Activated CD4-positive, alpha-beta memory T cell treated with anti-CD3 and anti-CD28 coated beads for 36 hours (primary cell): ENCODE measurements at regions of chr15 and their contacts with region 1.

Region 1: GRCh38 chr15:44426975-44427755 is at the start of gene CTDSPL2:
- DNase-seq: peak; percentile 97
- H3K4me3 Mint-ChIP-seq: peak within 1 kb of the TSS; percentile 95
- H3K27ac Mint-ChIP-seq: peak within 1 kb of the TSS; percentile 100
- H3K4me1 Mint-ChIP-seq: peaks cover 36% of the 10 kb centered on the region
- H3K27me3 Mint-ChIP-seq: no peaks in the 10 kb centered on the region
- total RNA-seq, gene CTDSPL2: 53.1 to 55.9 TPM

Region 2: DNA sequence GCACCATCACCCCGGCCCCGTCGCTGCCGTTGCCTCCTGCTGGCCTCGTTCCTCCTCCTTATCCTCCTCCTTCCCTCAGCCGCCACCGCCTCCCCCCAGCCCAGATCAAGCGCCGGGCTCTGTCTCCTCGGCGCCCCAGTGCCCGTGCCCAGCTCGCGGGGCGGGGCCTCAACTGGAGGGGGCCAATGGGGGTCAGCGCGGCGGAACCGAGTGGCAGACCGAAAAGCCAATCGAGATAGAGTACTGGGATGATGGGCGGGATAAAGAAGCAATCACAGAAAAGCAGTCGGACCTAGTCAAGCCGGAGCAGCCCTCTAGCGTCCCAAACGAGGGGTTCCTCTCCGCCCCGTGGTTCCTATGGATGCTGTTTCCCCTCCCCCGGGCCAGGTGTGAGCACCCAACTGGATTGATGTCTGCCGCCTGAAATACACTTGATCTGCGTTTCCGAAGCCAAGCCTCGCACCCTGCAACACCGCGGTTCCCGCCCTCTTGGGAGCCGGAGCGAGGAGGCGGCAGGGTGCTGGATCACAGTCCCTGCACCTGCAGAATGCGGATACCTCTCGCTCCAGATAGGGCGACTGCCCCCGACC is 231.9 kb before region 1 on chr15 and contains the start of gene FRMD5:
- CTCF ChIA-PET with region 1: no interaction called
- POLR2A ChIA-PET with region 1: no interaction called
- intact Hi-C with region 1: loop called (anchors 2 kb)
- DNase-seq: peak; percentile 94
- H3K4me3 Mint-ChIP-seq: peak within 1 kb of the TSS; percentile 68
- H3K27ac Mint-ChIP-seq: no peak within 1 kb of the TSS
- H3K4me1 Mint-ChIP-seq: peaks cover 16% of the 10 kb centered on the region
- H3K27me3 Mint-ChIP-seq: peaks cover 42% of the 10 kb centered on the region
- total RNA-seq, gene FRMD5: 0.24 to 0.31 TPM

Region 3: GRCh38 chr15:44308415-44308814 is 118.8 kb before region 1 on chr15:
- CTCF ChIA-PET with region 1: interaction called, 3 read pairs
- POLR2A ChIA-PET with region 1: interaction called, 9 read pairs
- intact Hi-C with region 1: loop called (anchors 1 kb)
- DNase-seq: peak; percentile 56
- H3K4me3 Mint-ChIP-seq: peak overlapping the region; percentile 46
- H3K27ac Mint-ChIP-seq: peak overlapping the region; percentile 89
- H3K4me1 Mint-ChIP-seq: peaks cover 39% of the 10 kb centered on the region
- H3K27me3 Mint-ChIP-seq: no peaks in the 10 kb centered on the region

Region 4: GRCh38 chr15:44325568-44325967 is 101.6 kb before region 1 on chr15:
- CTCF ChIA-PET with region 1: no interaction called
- POLR2A ChIA-PET with region 1: no interaction called
- intact Hi-C with region 1: no loop called
- DNase-seq: no peak
- H3K4me3 Mint-ChIP-seq: no peak overlapping the region
- H3K27ac Mint-ChIP-seq: no peak overlapping the region
- H3K4me1 Mint-ChIP-seq: no peaks in the 10 kb centered on the region
- H3K27me3 Mint-ChIP-seq: no peaks in the 10 kb centered on the region

Region 5: DNA sequence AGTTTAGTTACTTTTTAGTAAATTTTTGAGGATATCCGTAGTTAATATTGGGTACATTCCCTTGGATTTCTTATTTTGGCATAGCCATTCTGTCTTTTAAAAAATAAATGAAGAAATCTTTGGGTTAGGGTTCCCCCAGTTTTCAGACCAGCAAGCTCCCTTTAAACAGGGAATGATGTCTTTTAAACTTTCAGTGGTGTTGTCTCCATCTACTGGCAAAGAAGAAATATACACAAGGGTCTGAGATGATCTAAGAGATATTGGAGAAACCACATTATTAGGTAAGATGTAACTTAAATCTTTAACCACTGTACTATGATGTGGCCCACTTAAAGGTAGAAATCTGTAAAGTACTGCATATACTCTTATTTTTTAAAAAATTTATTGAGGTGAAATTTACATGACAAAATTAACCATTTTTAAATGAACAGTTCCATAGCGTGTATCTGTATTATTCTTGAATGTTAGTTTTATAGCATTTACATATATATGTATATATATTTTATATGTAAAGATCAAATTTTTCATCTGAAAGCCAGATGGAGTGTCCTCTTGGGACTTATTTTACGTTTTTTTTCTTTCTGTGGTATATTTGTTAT is 74.7 kb after region 1 on chr15:
- CTCF ChIA-PET with region 1: interaction called, 14 read pairs
- POLR2A ChIA-PET with region 1: interaction called, 18 read pairs
- intact Hi-C with region 1: loop called (anchors 2 kb)
- DNase-seq: no peak
- H3K4me3 Mint-ChIP-seq: no peak overlapping the region
- H3K27ac Mint-ChIP-seq: peak overlapping the region; percentile 48
- H3K4me1 Mint-ChIP-seq: peaks cover 22% of the 10 kb centered on the region
- H3K27me3 Mint-ChIP-seq: no peaks in the 10 kb centered on the region

Region 6: GRCh38 chr15:44633603-44634002 is 206.4 kb after region 1 on chr15:
- CTCF ChIA-PET with region 1: no interaction called
- POLR2A ChIA-PET with region 1: no interaction called
- intact Hi-C with region 1: loop called (anchors 5 kb)
- DNase-seq: peak; percentile 18
- H3K4me3 Mint-ChIP-seq: peak overlapping the region; percentile 70
- H3K27ac Mint-ChIP-seq: peak overlapping the region; percentile 96
- H3K4me1 Mint-ChIP-seq: peaks cover 23% of the 10 kb centered on the region
- H3K27me3 Mint-ChIP-seq: no peaks in the 10 kb centered on the region

Region 7: DNA sequence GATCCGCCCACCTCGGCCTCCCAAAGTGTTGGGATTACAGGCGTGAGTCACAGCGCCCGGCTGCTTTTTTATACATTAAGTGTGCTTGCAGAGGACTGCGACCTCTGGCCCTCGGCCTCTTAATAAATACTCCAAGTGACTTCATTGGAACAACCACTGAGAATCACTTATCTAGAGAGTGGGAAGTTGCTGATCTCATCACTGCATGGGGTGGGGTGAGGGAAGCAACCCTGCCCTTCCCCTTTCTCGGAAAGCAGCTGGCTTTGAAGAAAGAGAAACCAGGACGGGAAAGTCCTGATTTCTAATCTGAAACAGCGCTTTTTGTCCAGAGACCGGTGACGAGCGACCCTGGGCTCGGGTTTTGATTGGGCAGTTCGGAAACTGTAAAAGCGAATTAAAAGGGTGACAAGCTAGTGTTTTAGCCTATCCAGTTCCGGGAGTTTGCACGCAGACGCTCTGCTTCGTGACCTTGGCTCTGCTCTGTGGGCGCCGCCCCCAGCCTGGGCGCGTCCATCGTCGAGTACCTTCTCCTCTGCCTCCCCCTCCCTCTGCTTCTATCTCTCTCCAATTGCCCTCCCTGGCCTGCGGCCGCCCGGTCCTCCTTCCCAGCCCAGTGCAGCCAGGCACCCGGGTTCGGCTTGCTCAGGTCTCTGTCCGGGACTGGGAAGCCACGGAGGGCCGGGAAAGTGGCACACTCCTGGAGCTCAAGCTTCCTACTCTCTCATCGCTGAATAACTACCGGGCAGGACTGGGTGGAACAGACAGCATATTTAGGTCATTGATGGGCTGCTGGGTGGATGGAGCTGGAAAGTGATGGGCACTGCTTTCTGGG is 301.6 kb after region 1 on chr15:
- CTCF ChIA-PET with region 1: no interaction called
- POLR2A ChIA-PET with region 1: no interaction called
- intact Hi-C with region 1: loop called (anchors 5 kb)
- DNase-seq: peak; percentile 97
- H3K4me3 Mint-ChIP-seq: peak overlapping the region; percentile 100
- H3K27ac Mint-ChIP-seq: peak overlapping the region; percentile 100
- H3K4me1 Mint-ChIP-seq: peaks cover 66% of the 10 kb centered on the region
- H3K27me3 Mint-ChIP-seq: no peaks in the 10 kb centered on the region